AG04450 (cell line): ENCODE measurements at regions of chr4 and their contacts with region 1.

Region 1: DNA sequence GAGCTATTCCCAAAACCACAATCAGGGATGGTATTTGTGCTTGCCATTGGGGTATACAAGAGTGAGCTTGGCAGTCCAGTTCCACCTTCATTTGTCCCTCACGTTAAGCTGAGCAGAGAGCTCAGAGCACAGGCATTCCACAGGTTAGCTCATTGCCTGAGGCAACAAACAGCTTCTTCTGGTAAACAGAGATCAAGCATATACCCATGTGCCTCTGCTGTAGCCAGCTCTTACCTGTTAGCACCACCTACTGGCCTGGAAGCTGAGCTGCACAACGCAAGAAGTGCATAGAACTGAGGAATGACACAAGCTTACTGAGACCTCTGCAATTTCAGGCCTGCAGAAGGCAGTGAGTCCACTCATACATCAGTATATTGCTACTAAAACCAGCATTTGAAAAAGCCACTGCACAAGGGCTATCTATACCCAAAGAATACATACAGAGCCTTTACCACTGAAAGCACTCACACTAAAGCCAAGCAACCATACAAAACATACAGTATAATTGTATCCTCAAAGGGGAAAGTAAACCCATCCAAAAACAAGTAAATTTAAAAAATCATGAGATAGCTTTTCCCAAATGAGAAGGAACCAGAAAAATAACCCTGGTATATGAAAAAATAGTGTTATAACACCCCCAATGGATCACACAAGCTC is 258.3 kb upstream of the GABRA2 start:
- DNase-seq: peak; percentile 20
- H3K4me3 ChIP-seq: no peak overlapping the region
- H3K27ac ChIP-seq: no peak overlapping the region
- H3K27me3 ChIP-seq: no peaks in the 10 kb centered on the region
- CTCF ChIP-seq: peak; percentile 80

Region 2: DNA sequence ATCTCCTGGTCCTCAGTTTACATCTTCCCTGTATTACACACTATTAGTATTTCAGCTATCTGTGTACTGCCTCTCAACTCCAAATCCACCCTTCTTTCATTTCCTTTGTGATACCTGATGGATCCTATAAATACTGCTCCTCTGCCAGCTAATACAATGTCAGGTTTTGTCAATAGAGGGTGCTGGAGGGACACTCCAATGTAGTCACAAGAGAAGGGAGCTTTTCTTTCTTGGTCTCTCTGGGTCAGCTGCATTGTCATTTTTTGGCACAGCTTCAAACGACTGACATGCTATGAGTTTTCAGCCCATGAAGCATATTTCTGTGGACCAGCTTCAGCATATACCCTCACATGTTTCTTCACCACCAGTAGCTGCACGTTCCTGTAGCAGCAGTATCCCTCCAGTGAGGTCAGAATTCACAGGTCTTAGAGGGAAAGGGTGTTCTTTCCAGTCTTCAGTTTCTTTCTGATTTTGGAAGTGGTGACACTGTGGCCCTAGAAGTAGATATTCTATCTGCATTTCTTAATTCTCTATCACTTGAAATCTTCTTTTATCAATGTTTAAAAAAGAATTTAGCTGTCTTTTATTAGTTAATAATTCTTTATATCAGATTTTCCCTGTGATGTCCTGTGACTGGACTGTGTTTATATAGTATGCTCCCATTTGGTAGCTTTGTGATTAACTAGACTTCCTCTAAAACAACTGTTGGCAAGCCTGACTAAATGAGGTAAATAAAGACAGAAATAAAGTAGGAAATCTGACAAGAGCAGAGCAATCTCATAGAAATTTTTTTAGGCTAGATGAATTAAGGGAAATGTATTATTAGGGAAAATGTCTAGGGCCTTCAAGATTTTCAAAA is 318.9 kb before region 1 on chr4:
- CTCF ChIA-PET with region 1: interaction called, 243 read pairs
- POLR2A ChIA-PET with region 1: no interaction called
- DNase-seq: peak; percentile 7
- H3K4me3 ChIP-seq: no peak overlapping the region
- H3K27ac ChIP-seq: no peak overlapping the region
- H3K27me3 ChIP-seq: no peaks in the 10 kb centered on the region
- CTCF ChIP-seq: peak; percentile 62

Region 3: DNA sequence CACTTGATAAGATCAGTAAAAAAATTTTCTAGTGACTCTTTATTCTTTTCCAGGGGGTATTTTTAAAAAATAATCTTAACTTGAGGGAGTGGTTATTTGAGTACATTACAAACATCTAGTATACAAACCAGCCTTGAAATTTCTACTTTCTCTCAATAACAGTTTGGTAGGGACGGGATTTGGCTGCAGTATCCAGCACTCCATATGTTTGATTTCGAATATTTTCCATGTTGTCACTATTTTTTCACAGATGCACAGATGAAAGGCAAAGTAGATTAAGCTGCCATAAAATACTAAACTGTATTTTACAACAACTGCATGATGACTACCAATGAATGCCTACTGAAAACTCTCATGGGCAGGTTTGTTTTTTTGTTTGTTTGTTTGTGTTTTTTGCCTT is 35.8 kb after region 1 on chr4:
- CTCF ChIA-PET with region 1: no interaction called
- POLR2A ChIA-PET with region 1: no interaction called
- DNase-seq: no peak
- H3K4me3 ChIP-seq: no peak overlapping the region
- H3K27ac ChIP-seq: no peak overlapping the region
- H3K27me3 ChIP-seq: no peaks in the 10 kb centered on the region
- CTCF ChIP-seq: no peak

Region 4: GRCh38 chr4:46765465-46765864 is 117.2 kb after region 1 on chr4:
- CTCF ChIA-PET with region 1: no interaction called
- POLR2A ChIA-PET with region 1: no interaction called
- DNase-seq: no peak
- H3K4me3 ChIP-seq: no peak overlapping the region
- H3K27ac ChIP-seq: no peak overlapping the region
- H3K27me3 ChIP-seq: no peaks in the 10 kb centered on the region
- CTCF ChIP-seq: no peak